Posterior cingulate gyrus (tissue), 11 donors: ENCODE measurements at regions of chr6 and their contacts with region 1.

Region 1: DNA sequence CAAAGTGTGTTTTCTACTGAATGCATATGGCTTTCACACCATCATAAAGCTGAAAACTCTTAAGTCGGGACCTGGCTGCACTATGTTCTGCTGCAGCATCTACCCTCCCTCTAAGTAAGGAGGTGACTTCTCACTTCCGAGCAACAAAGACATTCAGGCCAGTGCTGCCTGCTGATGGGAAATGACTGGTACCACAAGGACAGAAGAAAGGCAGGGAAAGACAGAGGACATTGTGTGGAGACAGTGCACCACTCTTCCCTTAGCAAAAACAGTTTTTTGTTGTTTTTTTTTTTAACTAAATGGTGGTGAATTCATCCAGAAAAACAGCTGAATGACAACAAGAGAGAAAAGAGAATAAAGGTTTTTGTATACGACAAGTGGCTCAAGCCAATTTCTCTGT is 81.5 kb downstream of the MAP7 start:
- DNase-seq: peak in 8 of 10 donors; percentile 31 to 94 (median 62)

Region 2: GRCh38 chr6:136526196-136526930 is 57.7 kb after region 1 on chr6:
- intact Hi-C with region 1: loop called (anchors 2 kb)
- DNase-seq: peak; percentile 74 to 98 (median 84)

Region 3: GRCh38 chr6:136772685-136773472 is 304.2 kb after region 1 on chr6:
- intact Hi-C with region 1: no loop called
- DNase-seq: peak in 3 of 10 donors; percentile 48 to 84 (median 75)